ENCODE measurements at regions of chr2 and their contacts with region 1.

Region 1: GRCh38 chr2:31008561-31009114 is 129.6 kb downstream of the GALNT14 start:
- DNase-seq: no peak
- H3K4me3 ChIP-seq: no peak overlapping the region
- H3K27ac ChIP-seq: no peak overlapping the region
- H3K4me1 ChIP-seq: no peaks in the 10 kb centered on the region
- H3K27me3 ChIP-seq: no peaks in the 10 kb centered on the region
- CTCF ChIP-seq: no peak
- EP300 ChIP-seq: no peak
- POLR2A ChIP-seq: no peak

Region 2: GRCh38 chr2:29810956-29811355 is 1197.7 kb before region 1 on chr2:
- intact Hi-C with region 1: no loop called
- DNase-seq: no peak
- H3K4me3 ChIP-seq: no peak overlapping the region
- H3K27ac ChIP-seq: no peak overlapping the region
- H3K4me1 ChIP-seq: no peaks in the 10 kb centered on the region
- H3K27me3 ChIP-seq: no peaks in the 10 kb centered on the region
- CTCF ChIP-seq: no peak
- EP300 ChIP-seq: no peak
- POLR2A ChIP-seq: no peak

Region 3: GRCh38 chr2:30747211-30747610 is 261.4 kb before region 1 on chr2:
- intact Hi-C with region 1: no loop called
- DNase-seq: no peak
- H3K4me3 ChIP-seq: no peak overlapping the region
- H3K27ac ChIP-seq: no peak overlapping the region
- H3K4me1 ChIP-seq: no peaks in the 10 kb centered on the region
- H3K27me3 ChIP-seq: no peaks in the 10 kb centered on the region
- CTCF ChIP-seq: no peak
- EP300 ChIP-seq: no peak
- POLR2A ChIP-seq: no peak

Region 4: DNA sequence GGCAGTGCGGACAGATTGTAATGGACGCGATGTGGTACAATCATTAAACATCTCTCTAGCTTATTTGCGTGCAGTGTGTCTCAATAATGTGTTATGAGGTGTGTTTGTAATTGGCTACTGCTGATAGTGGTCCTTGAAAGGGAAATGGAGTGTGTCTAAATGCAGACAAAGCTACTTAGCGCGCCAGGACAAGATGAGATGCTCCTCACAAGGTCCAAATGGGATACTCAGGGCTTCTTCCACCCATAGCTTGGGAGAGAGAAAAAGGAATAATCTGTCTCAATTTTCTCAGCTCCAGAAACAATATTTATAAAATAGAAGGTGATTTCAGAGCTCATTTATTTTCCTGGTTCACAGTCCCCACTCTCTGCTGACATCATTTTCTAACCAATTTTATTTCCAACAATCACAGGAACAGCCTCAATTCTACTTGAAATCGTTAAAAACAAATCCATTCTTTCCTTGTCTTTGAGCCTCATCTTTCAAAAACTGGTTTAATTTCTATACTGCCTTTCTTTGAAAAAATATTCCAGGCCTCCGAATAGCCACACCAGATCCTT is 101.1 kb after region 1 on chr2:
- intact Hi-C with region 1: no loop called
- DNase-seq: no peak
- H3K4me3 ChIP-seq: no peak overlapping the region
- H3K27ac ChIP-seq: no peak overlapping the region
- H3K4me1 ChIP-seq: no peaks in the 10 kb centered on the region
- H3K27me3 ChIP-seq: no peaks in the 10 kb centered on the region
- CTCF ChIP-seq: no peak
- EP300 ChIP-seq: no peak
- POLR2A ChIP-seq: no peak

Region 5: GRCh38 chr2:32271063-32271462 is 1262.4 kb after region 1 on chr2:
- intact Hi-C with region 1: no loop called
- DNase-seq: no peak
- H3K4me3 ChIP-seq: no peak overlapping the region
- H3K27ac ChIP-seq: no peak overlapping the region
- H3K4me1 ChIP-seq: no peaks in the 10 kb centered on the region
- H3K27me3 ChIP-seq: no peaks in the 10 kb centered on the region
- CTCF ChIP-seq: no peak
- EP300 ChIP-seq: no peak
- POLR2A ChIP-seq: no peak

Region 6: DNA sequence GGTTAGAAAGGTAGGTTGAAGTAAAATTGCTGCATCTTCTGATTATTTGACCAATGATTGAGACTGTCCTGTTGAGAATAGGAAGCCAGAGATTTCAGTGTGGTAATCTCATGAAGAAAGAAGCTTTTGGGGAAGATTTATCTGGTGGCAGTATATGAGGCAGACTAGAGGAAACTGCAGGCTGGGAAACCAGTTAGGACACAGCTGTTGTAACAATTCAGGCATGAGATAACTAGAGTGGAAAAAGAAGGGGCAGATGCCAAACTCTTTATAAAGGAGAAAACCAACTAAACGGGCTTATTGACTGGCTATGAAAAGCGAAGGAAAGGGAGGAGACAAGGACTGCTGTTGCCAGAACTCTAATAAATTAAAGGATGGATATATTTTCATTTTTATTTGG is 1774.8 kb after region 1 on chr2:
- intact Hi-C with region 1: loop called in 1 of 4 experiments (anchors 10 kb)
- DNase-seq: no peak
- H3K4me3 ChIP-seq: no peak overlapping the region
- H3K27ac ChIP-seq: no peak overlapping the region
- H3K4me1 ChIP-seq: no peaks in the 10 kb centered on the region
- H3K27me3 ChIP-seq: no peaks in the 10 kb centered on the region
- CTCF ChIP-seq: no peak
- EP300 ChIP-seq: no peak
- POLR2A ChIP-seq: no peak